ENCODE measurements at regions of chr3 and their contacts with region 1.

Region 1: DNA sequence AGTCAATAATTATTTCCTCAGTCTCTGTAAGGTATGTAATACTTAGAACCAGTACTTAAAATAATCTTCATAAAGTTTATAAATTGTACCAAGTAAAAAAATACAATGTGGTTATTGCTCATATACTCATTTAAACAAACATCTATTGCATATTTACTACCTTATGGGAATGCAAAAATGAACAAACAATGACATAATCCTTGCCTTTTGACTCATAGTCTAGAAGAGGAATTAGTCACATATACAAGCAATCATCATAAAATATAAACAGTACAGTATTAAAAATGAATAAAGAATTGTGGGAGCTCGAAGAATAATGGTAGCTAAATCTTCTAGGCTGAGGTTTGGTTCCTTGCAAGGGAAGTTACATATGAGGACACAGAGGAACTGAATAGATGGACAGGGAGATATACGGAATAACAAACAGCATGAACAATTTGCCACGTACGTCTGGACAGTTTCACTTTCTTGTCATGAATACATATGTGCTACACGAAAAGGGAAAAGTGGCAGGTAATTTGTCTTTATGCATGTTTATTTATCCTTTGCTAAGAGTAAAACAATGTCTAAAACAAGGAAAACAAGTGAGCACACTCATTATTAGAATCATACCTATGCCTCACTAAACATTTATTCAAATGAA is 17.2 kb downstream of the IMPG2 start:
- DNase-seq: no peak
- H3K4me3 ChIP-seq: no peak overlapping the region
- H3K27ac ChIP-seq: no peak overlapping the region
- H3K4me1 ChIP-seq: no peaks in the 10 kb centered on the region
- H3K27me3 ChIP-seq: no peaks in the 10 kb centered on the region
- CTCF ChIP-seq: no peak

Region 2: DNA sequence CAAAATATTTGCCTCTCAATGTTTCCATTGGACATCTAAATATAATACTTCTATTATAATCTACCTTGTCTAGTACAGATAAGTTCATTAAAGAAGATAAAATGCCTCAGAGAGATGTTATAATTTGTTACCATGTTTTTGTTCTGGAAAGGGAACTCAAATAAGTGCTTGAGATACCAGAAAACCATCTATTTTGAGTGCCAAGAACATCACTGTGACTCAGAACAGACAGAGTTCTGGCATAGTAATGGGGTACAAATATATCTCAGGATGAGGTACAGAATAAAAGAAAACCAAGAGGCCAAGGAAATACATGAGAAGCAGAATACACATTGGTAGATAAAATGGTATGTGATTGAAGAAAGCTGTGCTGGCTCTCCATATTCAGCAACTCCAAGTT is 41.7 kb before region 1 on chr3:
- intact Hi-C with region 1: loop called (anchors 2 kb)
- DNase-seq: no peak
- H3K4me3 ChIP-seq: no peak overlapping the region
- H3K27ac ChIP-seq: peak overlapping the region; percentile 41 to 46
- H3K4me1 ChIP-seq: peaks cover 6 to 17% of the 10 kb centered on the region in 2 donors
- H3K27me3 ChIP-seq: no peaks in the 10 kb centered on the region
- CTCF ChIP-seq: no peak

Region 3: GRCh38 chr3:101284757-101285156 is 18.5 kb before region 1 on chr3:
- intact Hi-C with region 1: no loop called
- DNase-seq: no peak
- H3K4me3 ChIP-seq: no peak overlapping the region
- H3K27ac ChIP-seq: no peak overlapping the region
- H3K4me1 ChIP-seq: no peaks in the 10 kb centered on the region
- H3K27me3 ChIP-seq: no peaks in the 10 kb centered on the region
- CTCF ChIP-seq: no peak